A549 (cell line): ENCODE measurements at regions of chr14 and their contacts with region 1.

Region 1: GRCh38 chr14:36647824-36648753 is 13.6 kb upstream of the PAX9 start:
- DNase-seq: peak; percentile 47 to 69
- ATAC-seq: peak; percentile 95 to 98
- H3K4me3 ChIP-seq: peak overlapping the region; percentile 51
- H3K27ac ChIP-seq: peak overlapping the region; percentile 60 to 81
- H3K4me1 ChIP-seq: peaks cover 5% of the 10 kb centered on the region; the same call in 2 of the 3 replicates
- CTCF ChIP-seq: peak; percentile 73
- EP300 ChIP-seq: no peak
- POLR2A ChIP-seq: no peak
- RAD21 ChIP-seq: peak; percentile 76 to 85

Region 2: GRCh38 chr14:36553656-36554260 is 94.3 kb before region 1 on chr14:
- CTCF ChIA-PET with region 1: interaction called, 10 read pairs
- POLR2A ChIA-PET with region 1: no interaction called
- DNase-seq: peak; percentile 29 to 64
- ATAC-seq: peak; percentile 68 to 86; a peak in 4 of 6 replicates
- H3K4me3 ChIP-seq: no peak overlapping the region
- H3K27ac ChIP-seq: no peak overlapping the region
- H3K4me1 ChIP-seq: no peaks in the 10 kb centered on the region
- CTCF ChIP-seq: peak; percentile 81
- EP300 ChIP-seq: no peak
- POLR2A ChIP-seq: no peak
- RAD21 ChIP-seq: peak; percentile 63 to 65

Region 3: DNA sequence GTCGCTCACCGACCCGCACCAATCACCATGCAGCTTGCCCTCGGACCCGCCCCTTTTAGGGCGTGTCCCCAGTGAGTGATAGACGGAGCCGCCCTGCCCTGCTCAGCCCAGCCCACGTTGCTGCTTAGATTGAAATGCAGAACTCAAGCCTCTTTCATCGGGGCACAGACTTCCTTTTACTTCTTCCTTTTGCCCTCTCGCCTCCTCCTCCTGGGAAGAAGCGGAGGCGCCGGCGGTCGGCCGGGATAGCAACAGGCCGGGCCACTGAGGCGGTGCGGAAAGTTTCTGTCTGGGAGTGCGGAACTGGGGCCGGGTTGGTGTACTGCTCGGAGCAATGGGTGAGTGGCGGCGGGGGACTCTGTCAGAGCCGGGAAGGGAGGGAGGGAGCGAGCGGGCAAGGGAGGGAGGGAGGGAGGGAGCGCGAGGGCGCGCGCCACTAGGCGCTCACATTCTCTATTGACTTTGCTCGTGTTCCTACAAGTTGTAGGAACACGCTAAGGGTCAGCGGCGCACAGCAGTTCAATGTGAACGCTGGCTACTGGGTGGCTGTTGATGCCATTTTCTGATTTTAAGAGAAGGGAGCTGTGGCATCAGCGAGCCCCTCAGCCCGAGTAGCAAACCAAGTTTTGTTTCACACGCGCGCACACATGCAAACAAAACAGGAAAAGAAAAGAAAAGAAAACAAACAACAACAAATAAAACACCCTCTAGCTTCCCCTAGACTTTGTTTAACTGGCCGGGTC is 13.8 kb after region 1 on chr14 and contains the start of gene PAX9:
- CTCF ChIA-PET with region 1: interaction called, 118 read pairs
- POLR2A ChIA-PET with region 1: interaction called, 3 read pairs
- DNase-seq: peak; percentile 88 to 91
- ATAC-seq: peak; percentile 92 to 98
- H3K4me3 ChIP-seq: peak within 1 kb of the TSS; percentile 66
- H3K27ac ChIP-seq: peak within 1 kb of the TSS; percentile 71 to 84
- H3K4me1 ChIP-seq: peaks cover 6% of the 10 kb centered on the region; the same call in 1 of the 3 replicates
- CTCF ChIP-seq: no peak
- EP300 ChIP-seq: no peak
- POLR2A ChIP-seq: peak; percentile 22; the same call in 1 of the 2 replicates
- RAD21 ChIP-seq: no peak
- polyA plus RNA-seq, gene PAX9: 1.4 and 1.8 TPM in 2 replicates

Region 4: DNA sequence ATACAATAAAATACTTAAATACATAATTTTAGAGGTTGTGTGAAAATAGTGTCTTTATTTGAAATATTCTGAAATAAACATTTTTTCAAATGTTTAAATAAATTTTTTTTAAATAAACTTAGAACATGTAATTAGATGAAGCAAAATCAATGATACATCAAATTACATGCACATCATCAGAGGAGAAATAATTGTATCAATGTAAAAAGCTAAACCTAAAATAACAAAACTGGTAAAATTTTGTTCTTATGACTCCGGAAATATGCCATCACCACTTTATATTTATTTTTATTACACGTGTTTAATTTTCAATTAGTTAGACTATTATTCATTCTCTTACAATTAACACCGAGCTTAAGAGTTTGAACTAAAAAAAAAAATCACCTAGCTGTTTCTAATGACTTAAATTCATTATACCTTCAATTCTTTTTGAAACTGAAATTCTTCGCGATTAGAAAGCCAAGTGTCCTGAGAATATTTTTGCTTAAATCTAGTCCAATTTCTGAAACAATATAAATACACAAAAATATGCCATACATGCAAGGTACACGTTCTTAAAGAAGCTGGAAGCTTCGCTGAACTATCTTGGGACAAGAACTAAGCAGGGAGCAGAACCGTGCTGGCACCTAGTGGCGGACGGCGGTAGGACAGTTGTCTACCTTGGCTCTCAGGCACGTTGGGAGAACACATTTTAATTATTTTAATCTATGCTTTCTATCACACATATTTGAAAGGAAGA is 293.9 kb after region 1 on chr14:
- CTCF ChIA-PET with region 1: interaction called, 71 read pairs
- POLR2A ChIA-PET with region 1: interaction called, 5 read pairs
- DNase-seq: peak; percentile 34 to 75
- ATAC-seq: peak; percentile 91 to 95
- H3K4me3 ChIP-seq: no peak overlapping the region
- H3K27ac ChIP-seq: no peak overlapping the region
- H3K4me1 ChIP-seq: peaks cover 20% of the 10 kb centered on the region; the same call in 2 of the 3 replicates
- CTCF ChIP-seq: peak; percentile 87
- EP300 ChIP-seq: no peak
- POLR2A ChIP-seq: no peak
- RAD21 ChIP-seq: peak; percentile 89 to 90

Region 5: DNA sequence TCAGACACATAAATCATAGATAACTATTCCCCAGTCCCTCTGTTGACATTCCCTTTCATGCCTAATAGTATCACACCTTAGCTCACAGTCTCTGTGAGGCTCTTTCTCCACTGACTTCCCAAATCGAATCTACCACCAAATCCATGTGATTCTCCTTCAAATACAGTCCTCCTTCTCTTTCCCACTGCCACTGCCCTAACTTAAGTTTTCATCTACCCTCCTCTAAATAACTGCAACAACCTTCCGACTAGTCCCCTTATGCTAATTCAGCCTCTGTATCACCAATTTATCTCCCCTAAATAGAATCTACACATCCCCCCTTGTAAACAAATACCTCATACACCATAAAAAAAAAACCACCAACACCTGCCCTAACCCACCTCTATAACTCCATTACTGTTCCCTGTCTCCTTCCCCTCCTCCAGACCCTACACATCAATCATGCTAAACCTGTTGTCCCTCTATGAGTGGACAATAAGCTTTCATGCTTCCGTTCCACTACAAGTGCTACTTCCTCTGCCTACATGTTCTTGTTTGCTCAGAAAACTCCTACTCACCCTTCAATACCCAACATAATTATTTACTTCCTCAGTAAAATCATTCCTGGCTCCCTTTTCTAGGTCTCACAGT is 485.3 kb after region 1 on chr14:
- CTCF ChIA-PET with region 1: interaction called, 11 read pairs
- POLR2A ChIA-PET with region 1: no interaction called
- DNase-seq: no peak
- ATAC-seq: no peak
- H3K4me3 ChIP-seq: no peak overlapping the region
- H3K27ac ChIP-seq: no peak overlapping the region
- H3K4me1 ChIP-seq: no peaks in the 10 kb centered on the region
- CTCF ChIP-seq: no peak
- EP300 ChIP-seq: no peak
- POLR2A ChIP-seq: no peak
- RAD21 ChIP-seq: no peak

Region 6: DNA sequence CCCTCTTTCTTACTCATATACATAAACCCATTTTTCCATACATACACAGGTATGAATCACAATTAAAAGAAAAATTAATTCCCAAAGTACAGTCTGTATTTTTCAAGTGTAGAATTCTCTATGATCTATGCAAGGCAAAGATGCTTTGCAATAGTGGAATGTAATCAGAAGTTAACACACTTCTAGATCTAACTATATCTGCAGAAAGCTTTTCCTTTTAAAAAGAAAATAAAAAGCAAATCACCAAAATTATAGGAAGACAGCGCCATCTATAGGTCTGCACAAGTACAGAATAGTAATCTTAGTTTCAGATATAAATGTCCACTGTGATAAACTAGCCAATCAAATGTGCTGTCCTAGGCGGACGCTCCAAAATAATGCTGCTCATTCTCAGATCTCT is 502.3 kb after region 1 on chr14:
- CTCF ChIA-PET with region 1: interaction called, 130 read pairs
- POLR2A ChIA-PET with region 1: no interaction called
- DNase-seq: peak; percentile 44 to 50
- ATAC-seq: peak; percentile 82 to 91; a peak in 5 of 6 replicates
- H3K4me3 ChIP-seq: no peak overlapping the region
- H3K27ac ChIP-seq: no peak overlapping the region
- H3K4me1 ChIP-seq: no peaks in the 10 kb centered on the region
- CTCF ChIP-seq: peak; percentile 82
- EP300 ChIP-seq: no peak
- POLR2A ChIP-seq: no peak
- RAD21 ChIP-seq: peak; percentile 75 to 81